A549 (cell line): ENCODE measurements at regions of chr2 and their contacts with region 1.

Region 1: GRCh38 chr2:101387151-101387807 is at the start of gene CREG2:
- DNase-seq: peak; percentile 65 to 73
- ATAC-seq: peak; percentile 95
- H3K4me3 ChIP-seq: peak within 1 kb of the TSS; percentile 64
- H3K27ac ChIP-seq: peak within 1 kb of the TSS; percentile 57 to 80
- H3K4me1 ChIP-seq: peaks cover 9% of the 10 kb centered on the region; the same call in 2 of the 3 replicates
- CTCF ChIP-seq: peak; percentile 81
- EP300 ChIP-seq: no peak
- POLR2A ChIP-seq: peak; percentile 34; the same call in 1 of the 2 replicates
- RAD21 ChIP-seq: peak; percentile 23 to 62; a peak in 3 of 5 replicates
- polyA plus RNA-seq, gene CREG2: 1.5 and 2.4 TPM in 2 replicates

Region 2: GRCh38 chr2:101349893-101350662 is 37.2 kb before region 1 on chr2:
- CTCF ChIA-PET with region 1: interaction called, 35 read pairs
- POLR2A ChIA-PET with region 1: interaction called, 3 read pairs
- DNase-seq: peak in 1 of 2 experiments; percentile 24
- ATAC-seq: peak; percentile 79 to 85; a peak in 5 of 6 replicates
- H3K4me3 ChIP-seq: no peak overlapping the region
- H3K27ac ChIP-seq: no peak overlapping the region
- H3K4me1 ChIP-seq: no peaks in the 10 kb centered on the region
- CTCF ChIP-seq: peak; percentile 31; the same call in 2 of the 3 replicates
- EP300 ChIP-seq: no peak
- POLR2A ChIP-seq: no peak
- RAD21 ChIP-seq: peak in 1 of 2 experiments; percentile 37; a peak in 3 of 5 replicates

Region 3: GRCh38 chr2:101361121-101361870 is 26.0 kb before region 1 on chr2:
- CTCF ChIA-PET with region 1: interaction called, 13 read pairs
- POLR2A ChIA-PET with region 1: no interaction called
- DNase-seq: no peak
- ATAC-seq: no peak
- H3K4me3 ChIP-seq: no peak overlapping the region
- H3K27ac ChIP-seq: peak overlapping the region; percentile 24 to 27; a peak in 4 of 6 replicates
- H3K4me1 ChIP-seq: peaks cover 36% of the 10 kb centered on the region
- CTCF ChIP-seq: no peak
- EP300 ChIP-seq: no peak
- POLR2A ChIP-seq: no peak
- RAD21 ChIP-seq: no peak

Region 4: DNA sequence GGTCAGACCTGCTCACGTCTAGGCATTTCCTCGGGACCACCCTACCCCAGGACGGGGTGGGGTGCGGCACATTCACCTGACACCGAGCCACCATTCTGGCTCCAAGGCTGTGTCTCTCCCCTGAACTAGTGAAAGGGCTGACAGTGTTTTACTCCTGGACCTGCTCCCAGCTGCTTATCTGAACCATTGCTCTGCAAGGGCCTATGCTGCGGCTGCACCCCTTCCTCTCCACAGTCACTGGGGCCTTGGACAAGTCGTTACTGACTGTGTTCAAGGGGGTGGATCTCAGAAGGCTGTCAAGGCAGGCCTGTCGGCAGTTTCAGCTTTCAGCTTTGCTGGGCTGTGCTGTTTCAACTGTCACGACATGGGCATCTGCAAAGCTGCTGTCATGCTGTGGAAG is 11.6 kb before region 1 on chr2:
- CTCF ChIA-PET with region 1: interaction called, 16 read pairs
- POLR2A ChIA-PET with region 1: no interaction called
- DNase-seq: no peak
- ATAC-seq: no peak
- H3K4me3 ChIP-seq: no peak overlapping the region
- H3K27ac ChIP-seq: no peak overlapping the region
- H3K4me1 ChIP-seq: no peaks in the 10 kb centered on the region
- CTCF ChIP-seq: no peak
- EP300 ChIP-seq: no peak
- POLR2A ChIP-seq: no peak
- RAD21 ChIP-seq: no peak